SK-MEL-5 (cell line): ENCODE measurements at regions of chr5 and their contacts with region 1.

Region 1: DNA sequence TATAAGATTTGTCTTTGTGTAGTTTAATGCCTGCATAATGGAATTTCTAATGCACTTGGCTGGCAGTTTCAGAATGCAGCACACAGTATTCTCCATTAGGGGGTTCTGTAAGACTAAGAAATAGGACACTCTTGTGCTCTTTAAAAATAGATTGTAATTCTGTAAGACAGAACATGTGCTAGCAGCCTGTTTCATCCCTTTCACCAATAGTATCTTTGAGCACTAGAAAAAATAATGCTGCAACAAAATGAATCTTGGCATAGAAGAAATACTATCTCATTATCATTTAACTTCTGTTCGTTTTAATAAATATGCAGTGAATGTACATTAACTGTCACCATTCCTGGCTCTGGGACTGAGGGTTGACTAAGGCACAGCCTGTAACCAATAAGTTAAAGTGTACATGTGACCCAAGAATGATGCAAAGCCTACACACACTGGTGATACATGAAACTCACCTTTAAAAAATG is 23.8 kb upstream of the ZNF622 start:
- DNase-seq: peak; percentile 82

Region 2: GRCh38 chr5:16539169-16539721 is 49.9 kb after region 1 on chr5:
- in situ Hi-C with region 1: no loop called
- DNase-seq: no peak

Region 3: GRCh38 chr5:16600397-16600796 is 111.0 kb after region 1 on chr5:
- in situ Hi-C with region 1: no loop called
- DNase-seq: peak; percentile 36

Region 4: DNA sequence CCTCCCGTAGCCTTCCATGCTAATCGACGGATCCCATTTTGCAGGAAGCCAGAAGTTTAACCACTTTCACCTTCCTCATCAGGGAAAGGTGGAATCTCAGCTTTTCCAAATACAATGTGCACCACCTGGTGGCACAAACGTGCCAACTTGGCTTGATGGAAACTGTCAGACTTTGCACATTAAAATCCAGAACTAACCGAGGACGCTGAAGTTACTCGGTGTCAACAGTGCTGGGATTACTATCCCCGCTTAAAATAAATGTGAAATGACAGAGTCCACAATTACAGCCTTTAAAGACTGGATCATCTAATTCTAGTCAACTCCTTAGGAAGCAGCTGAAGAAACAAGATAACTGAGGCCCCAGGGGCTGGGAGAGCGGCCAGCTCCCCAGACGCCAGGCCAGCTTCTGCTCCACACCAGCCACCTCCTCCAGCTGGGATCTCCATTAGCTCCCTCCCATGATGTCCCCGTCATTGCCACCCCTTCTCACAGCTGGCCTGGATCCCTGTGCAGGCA is 177.6 kb after region 1 on chr5:
- in situ Hi-C with region 1: loop called (anchors 25 kb)
- DNase-seq: peak; percentile 62

Region 5: GRCh38 chr5:16701134-16702099 is 212.1 kb after region 1 on chr5:
- in situ Hi-C with region 1: no loop called
- DNase-seq: no peak

Region 6: DNA sequence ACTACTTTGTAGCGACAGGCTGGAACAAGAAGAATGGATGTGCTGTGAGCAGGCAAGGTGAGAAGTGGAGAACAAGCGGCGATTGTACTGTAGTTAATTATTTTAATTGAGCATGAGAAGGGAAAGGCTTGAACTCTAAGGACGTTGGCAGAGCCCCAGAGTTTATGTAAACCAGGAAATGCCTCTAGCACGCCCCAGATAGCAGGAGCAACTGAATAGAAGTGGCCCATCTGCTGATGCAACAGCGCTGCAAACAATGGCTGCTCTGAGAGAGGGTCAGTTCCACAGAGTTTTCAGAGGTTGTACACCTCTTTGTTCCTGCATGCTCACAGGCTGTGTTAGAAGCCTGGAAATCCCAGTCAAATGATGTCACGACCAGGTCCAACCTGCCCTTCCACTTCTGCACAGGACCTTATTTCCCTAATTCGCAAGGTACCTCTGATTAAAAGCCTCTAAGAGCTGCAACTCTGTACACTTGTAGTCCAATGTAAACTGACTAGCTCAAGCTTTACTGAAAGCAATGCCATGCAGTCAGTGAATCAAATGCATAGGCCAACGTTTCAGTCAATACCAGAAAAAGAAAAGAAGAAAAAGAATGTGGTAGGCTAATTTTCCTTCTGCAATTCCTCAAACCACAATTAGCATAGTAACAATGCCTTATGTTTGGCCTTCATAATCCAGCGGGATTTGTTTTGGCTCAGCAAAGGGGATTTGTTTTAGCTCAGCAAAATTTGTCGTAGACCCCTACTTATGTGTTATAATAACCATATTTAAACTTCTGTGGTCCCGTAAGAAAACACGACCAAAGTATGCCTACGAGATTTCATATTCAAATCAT is 247.0 kb after region 1 on chr5:
- in situ Hi-C with region 1: no loop called
- DNase-seq: peak; percentile 98